ENCODE measurements at regions of chr1 and their contacts with region 1.

Region 1: DNA sequence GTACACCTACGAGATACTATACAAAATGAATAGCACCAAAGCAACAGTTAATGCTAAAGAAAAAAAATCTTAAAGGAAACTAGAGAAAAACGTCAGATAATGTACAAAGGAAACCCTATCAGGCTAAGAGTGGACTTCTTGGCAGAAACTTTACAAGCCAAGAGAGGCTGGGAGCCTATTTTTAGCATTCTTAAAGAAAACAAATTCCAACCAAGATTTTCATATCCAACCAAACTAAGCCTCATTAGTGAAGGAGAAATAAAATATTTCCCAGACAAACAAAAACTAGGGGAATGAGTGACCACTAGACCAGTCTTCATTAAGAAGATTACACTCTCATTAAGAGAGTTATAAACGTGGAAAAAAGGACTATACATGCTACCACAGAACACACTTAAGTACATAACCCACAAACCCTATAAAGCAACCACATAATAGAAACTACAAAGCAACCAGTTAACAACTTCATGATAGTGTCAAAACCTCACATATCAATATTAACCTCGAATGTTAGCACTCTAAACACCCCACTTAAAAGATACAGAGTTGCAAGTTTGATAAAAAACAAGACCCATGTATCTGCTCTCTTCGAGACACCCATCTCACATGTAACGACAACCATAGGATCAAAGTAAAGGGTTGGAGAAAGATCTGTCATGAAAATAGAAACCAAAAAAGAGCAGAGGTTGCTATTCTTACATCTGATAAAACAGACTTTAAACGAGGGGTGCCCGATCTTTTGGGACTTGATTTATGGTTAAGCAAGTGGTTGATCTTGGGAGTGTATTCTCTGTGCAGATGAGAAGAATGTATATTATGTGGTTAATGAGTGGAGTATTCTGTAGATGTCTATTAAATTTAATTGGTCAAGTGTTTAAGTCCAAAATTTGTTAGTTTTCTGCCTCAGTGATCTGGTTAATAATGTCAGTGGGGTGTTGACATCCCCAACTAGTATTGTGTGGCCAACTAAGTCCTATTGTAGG is 1301.4 kb downstream of the PLA2G4A start:
- DNase-seq: no peak
- ATAC-seq: no peak
- H3K4me3 ChIP-seq: no peak overlapping the region
- H3K27ac ChIP-seq: no peak overlapping the region
- H3K4me1 ChIP-seq: no peaks in the 10 kb centered on the region
- H3K27me3 ChIP-seq: no peaks in the 10 kb centered on the region
- CTCF ChIP-seq: no peak

Region 2: DNA sequence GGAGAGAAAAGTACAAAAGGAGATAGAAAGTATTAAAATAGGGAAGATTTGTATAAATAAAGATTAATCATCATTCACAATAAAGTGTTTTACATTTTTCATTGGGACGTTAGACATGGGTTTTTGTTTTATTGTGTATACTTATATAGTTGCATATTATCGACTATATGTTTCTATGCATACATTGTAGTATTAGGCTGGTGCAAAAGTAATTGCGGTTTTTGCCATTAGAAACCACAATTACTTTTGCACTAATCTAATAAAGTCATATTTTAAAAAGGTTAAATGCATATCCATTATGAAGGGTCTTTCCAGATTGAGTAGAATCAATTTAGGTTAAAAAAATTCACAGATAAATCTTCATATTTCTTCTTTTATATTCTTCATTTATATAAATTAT is 17.1 kb after region 1 on chr1:
- intact Hi-C with region 1: loop called in 1 of 10 experiments (anchors 1 kb)
- DNase-seq: no peak
- ATAC-seq: no peak
- H3K4me3 ChIP-seq: no peak overlapping the region
- H3K27ac ChIP-seq: no peak overlapping the region
- H3K4me1 ChIP-seq: no peaks in the 10 kb centered on the region
- H3K27me3 ChIP-seq: no peaks in the 10 kb centered on the region
- CTCF ChIP-seq: no peak

Region 3: GRCh38 chr1:188269956-188270355 is 139.8 kb after region 1 on chr1:
- intact Hi-C with region 1: no loop called
- DNase-seq: no peak
- ATAC-seq: no peak
- H3K4me3 ChIP-seq: no peak overlapping the region
- H3K27ac ChIP-seq: no peak overlapping the region
- H3K4me1 ChIP-seq: no peaks in the 10 kb centered on the region
- H3K27me3 ChIP-seq: no peaks in the 10 kb centered on the region
- CTCF ChIP-seq: no peak

Measured in heart right ventricle (tissue), 16 donors.